Activated T-helper 1 cell treated with anti-CD3 and anti-CD28 coated beads, Interleukin-12 subunit alpha, Interleukin-12 subunit beta, Interleukin-2, Interleukin-4 antibody, amounts not matched to agents 30 ng/mL and 10 ng/mL and 1 ng/mL, durations not matched to agents 14 hours and 24 hours and 36 hours (primary cell): ENCODE measurements at regions of chr6 and their contacts with region 1.

Region 1: DNA sequence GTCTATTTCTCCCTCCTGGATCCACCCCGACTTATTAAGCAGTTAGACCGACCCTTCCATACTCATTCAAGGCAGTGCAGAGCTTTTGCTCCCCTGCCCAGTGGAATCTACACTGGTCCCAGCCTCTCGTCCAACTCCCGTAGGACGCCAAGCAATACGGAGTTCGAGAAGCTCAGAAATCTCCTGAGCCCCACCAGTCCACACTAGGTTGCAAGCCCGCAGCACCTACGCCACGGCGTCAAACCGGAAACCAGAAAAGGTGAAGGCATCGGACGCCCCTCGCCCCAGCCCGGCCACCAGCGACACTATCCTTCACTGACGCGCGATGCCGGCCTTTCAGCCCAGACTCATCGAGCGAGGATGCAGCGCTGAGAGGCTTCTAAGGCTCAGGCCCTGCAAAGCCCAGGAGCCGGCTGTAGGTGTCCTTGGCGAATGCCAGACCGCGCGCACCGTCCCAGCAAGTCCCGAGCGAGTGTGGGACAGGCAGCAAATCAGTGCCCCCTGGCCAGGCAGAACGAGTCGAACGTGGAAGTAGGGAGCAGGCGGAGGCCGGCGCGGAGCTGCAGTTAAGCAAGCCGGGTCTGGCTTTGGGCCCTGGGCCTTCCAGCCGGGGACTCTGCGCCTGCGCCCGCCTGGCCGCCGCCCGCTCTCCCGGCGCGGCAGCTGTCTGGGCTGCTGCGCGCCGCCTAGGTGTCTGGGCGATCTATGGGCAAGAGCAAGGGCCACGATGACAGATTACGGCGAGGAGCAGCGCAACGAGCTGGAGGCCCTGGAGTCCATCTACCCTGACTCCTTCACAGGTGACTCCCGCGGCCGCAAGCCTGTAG is at the start of gene RWDD1:
- DNase-seq: peak; percentile 98
- H3K4me3 Mint-ChIP-seq: peak within 1 kb of the TSS; percentile 99
- H3K27ac Mint-ChIP-seq: peak within 1 kb of the TSS; percentile 97
- H3K4me1 Mint-ChIP-seq: peaks cover 54% of the 10 kb centered on the region
- H3K27me3 Mint-ChIP-seq: peaks cover 13% of the 10 kb centered on the region
- total RNA-seq, gene RWDD1: 41.4 and 41.5 TPM in 2 replicates

Region 2: GRCh38 chr6:116100419-116101301 is 470.4 kb before region 1 on chr6 and contains the start of gene NT5DC1:
- intact Hi-C with region 1: loop called (anchors 1 kb)
- DNase-seq: peak; percentile 82
- H3K4me3 Mint-ChIP-seq: peak within 1 kb of the TSS; percentile 95
- H3K27ac Mint-ChIP-seq: peak within 1 kb of the TSS; percentile 87
- H3K4me1 Mint-ChIP-seq: peaks cover 53% of the 10 kb centered on the region
- H3K27me3 Mint-ChIP-seq: no peaks in the 10 kb centered on the region
- total RNA-seq, gene NT5DC1: 30.1 and 37.2 TPM in 2 replicates

Region 3: GRCh38 chr6:116279260-116280063 is 291.6 kb before region 1 on chr6 and contains the start of gene TSPYL1:
- intact Hi-C with region 1: loop called (anchors 1 kb)
- DNase-seq: peak; percentile 91
- H3K4me3 Mint-ChIP-seq: peak within 1 kb of the TSS; percentile 91
- H3K27ac Mint-ChIP-seq: peak within 1 kb of the TSS; percentile 95
- H3K4me1 Mint-ChIP-seq: peaks cover 52% of the 10 kb centered on the region
- H3K27me3 Mint-ChIP-seq: peaks cover 2% of the 10 kb centered on the region
- total RNA-seq, gene TSPYL1: 41.8 and 43.5 TPM in 2 replicates

Region 4: DNA sequence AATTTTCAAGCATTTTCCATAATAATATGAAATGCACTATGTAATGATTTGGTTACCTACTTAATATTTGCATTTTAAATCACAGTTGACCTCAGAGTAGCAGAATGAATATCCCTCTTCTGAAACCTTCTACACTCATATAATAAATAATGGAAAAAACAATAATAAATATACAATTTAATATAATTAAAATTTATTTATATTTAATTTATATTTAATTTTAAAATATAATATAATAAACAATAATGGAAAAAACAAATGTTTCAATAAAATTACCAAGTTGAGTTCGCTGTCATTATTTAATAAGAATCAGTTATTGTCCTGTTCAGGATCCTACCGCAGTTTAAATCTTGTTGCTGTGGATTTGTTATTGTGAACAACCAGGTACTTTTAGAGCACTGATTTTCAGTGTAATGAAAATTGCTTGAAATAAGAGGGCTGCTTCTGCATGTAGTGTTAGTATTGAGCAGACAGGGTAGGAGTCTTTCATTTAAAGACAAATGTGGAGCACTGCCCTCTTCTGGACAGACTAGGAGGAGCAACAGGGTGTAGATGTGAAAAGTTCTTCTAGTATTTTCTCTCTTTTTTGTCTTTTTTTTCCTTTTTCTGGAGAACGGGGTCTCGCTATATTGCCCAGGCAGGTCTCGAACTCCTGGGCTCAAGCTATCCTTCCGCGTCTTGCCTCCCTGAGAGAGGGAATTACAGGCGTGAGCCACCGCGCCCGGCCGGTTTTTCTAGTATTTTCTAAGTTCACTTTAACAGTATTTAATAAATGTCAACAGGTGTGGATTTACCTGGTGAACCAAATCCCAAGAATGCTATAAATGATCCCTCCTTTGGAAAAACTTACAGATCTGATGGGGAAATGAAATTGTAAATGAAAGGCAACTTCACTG is 39.1 kb before region 1 on chr6:
- intact Hi-C with region 1: loop called (anchors 2 kb)
- DNase-seq: peak; percentile 56
- H3K4me3 Mint-ChIP-seq: no peak overlapping the region
- H3K27ac Mint-ChIP-seq: no peak overlapping the region
- H3K4me1 Mint-ChIP-seq: no peaks in the 10 kb centered on the region
- H3K27me3 Mint-ChIP-seq: peaks cover 46% of the 10 kb centered on the region

Region 5: DNA sequence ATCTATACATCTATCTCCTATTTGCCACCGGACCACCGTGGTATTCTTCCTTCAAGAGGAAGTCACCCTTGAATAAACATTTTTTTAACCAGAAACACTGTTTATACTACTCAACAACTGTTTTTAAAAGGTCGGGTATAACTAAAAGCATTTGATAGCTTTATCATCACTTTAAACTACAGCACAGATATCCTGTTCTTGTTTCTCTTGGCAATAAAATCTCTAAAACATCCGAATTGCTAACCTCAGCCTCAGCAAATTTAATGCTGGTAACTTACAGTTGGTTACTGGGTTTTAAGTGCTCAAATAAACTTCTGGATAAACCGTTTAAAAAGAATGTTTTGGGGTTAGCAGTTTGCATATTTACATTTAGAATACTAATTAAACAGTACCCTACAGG is 77.1 kb after region 1 on chr6:
- intact Hi-C with region 1: loop called (anchors 2 kb)
- DNase-seq: no peak
- H3K4me3 Mint-ChIP-seq: no peak overlapping the region
- H3K27ac Mint-ChIP-seq: no peak overlapping the region
- H3K4me1 Mint-ChIP-seq: peaks cover 27% of the 10 kb centered on the region
- H3K27me3 Mint-ChIP-seq: no peaks in the 10 kb centered on the region

Region 6: GRCh38 chr6:116680975-116681808 is 110.1 kb after region 1 on chr6 and contains the start of gene KPNA5:
- intact Hi-C with region 1: loop called (anchors 1 kb)
- DNase-seq: peak; percentile 84
- H3K4me3 Mint-ChIP-seq: peak within 1 kb of the TSS; percentile 97
- H3K27ac Mint-ChIP-seq: peak within 1 kb of the TSS; percentile 97
- H3K4me1 Mint-ChIP-seq: peaks cover 25% of the 10 kb centered on the region
- H3K27me3 Mint-ChIP-seq: no peaks in the 10 kb centered on the region
- total RNA-seq, gene KPNA5: 6.1 and 7.6 TPM in 2 replicates